HCT116 (cell line): ENCODE measurements at regions of chr20 and their contacts with region 1.

Region 1: DNA sequence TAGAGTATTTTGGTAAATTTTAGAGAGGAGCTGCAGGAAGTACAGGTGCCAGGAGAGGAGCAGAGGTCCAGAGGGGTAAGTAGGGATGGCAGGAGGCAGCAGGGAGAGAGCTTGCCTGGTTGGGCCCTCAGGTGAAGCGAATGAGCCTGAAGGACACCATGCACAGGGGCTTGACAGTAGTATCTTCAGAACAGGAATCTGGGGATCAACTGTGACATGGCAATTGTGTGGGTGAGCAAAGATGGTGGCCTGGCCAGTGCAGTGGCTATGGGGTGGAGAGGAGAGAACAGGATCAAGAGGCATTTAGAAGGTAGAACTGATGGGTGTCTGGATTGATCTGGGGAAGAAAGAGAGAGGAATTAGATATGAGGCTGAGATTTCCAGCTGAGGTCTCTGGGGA is 68.7 kb upstream of the RNF24 start:
- DNase-seq: no peak
- ATAC-seq: no peak
- H3K4me3 ChIP-seq: no peak overlapping the region
- H3K27ac ChIP-seq: no peak overlapping the region
- H3K4me1 ChIP-seq: peaks cover 5 to 27% of the 10 kb centered on the region in 2 experiments; a peak in 3 of 4 replicates
- H3K27me3 ChIP-seq: no peaks in the 10 kb centered on the region
- CTCF ChIP-seq: no peak
- POLR2A ChIP-seq: no peak
- RAD21 ChIP-seq: no peak

Region 2: GRCh38 chr20:4014031-4014474 is 70.0 kb before region 1 on chr20:
- CTCF ChIA-PET with region 1: interaction called, 16 read pairs
- POLR2A ChIA-PET with region 1: no interaction called
- RAD21 ChIA-PET with region 1: interaction called in 1 of 2 experiments, 3 read pairs
- intact Hi-C with region 1: loop called (anchors 1 kb)
- DNase-seq: peak; percentile 68
- ATAC-seq: peak; percentile 53
- H3K4me3 ChIP-seq: peak overlapping the region; percentile 71 to 82
- H3K27ac ChIP-seq: no peak overlapping the region
- H3K4me1 ChIP-seq: peaks cover 28 to 45% of the 10 kb centered on the region in 2 experiments; a peak in 3 of 4 replicates
- H3K27me3 ChIP-seq: no peaks in the 10 kb centered on the region
- CTCF ChIP-seq: peak; percentile 65 to 86 (median 74)
- POLR2A ChIP-seq: no peak
- RAD21 ChIP-seq: peak; percentile 89

Region 3: DNA sequence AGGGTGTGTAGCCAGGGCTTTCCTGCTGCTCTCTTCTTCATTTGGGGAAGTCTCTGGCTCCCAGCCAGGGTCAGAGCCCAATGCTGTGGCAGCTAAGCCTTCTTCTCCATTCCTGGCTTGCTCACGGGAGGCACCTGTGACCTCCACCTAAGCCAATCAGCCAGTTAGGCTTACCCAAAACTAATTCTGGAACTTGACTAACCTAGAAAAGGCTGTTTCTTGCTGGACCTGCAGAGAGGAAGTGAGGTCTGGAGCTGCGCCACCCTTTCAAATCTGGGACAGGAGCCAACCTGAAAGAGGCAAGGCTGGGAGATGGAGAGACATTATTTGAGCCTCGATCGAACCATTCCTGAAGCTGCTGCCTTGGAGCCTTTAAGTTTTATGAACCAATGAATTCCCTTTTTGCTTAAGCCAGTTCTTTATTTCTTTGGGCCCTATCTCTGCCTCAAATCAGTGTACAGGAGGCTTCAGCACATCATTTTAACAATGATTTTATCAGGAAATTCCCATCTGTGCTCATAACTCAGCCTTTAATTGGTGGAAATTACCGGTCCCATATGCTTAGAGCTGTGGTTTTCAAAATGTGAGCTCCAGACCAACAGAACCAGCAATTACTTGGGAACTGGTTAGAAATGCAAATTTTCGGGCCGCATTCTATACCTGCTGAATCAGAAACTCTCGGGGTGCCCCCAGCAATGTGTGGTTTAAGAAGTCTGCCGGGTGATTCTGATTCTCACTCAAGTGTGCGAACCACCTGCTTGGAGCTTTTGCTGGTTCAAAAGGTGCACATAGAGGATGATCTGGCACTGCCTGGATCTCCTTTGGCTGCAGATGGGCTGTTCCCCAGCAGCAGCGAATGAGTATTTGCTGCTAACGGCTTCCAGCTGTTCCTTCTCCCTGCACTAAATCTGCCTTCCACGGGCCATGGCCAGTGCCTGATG is 28.7 kb after region 1 on chr20:
- CTCF ChIA-PET with region 1: no interaction called
- POLR2A ChIA-PET with region 1: no interaction called
- RAD21 ChIA-PET with region 1: no interaction called
- intact Hi-C with region 1: no loop called
- DNase-seq: no peak
- ATAC-seq: no peak
- H3K4me3 ChIP-seq: no peak overlapping the region
- H3K27ac ChIP-seq: no peak overlapping the region
- H3K4me1 ChIP-seq: peaks cover 13 to 29% of the 10 kb centered on the region in 2 experiments; a peak in 3 of 4 replicates
- H3K27me3 ChIP-seq: no peaks in the 10 kb centered on the region
- CTCF ChIP-seq: no peak
- POLR2A ChIP-seq: no peak
- RAD21 ChIP-seq: no peak